ENCODE measurements at regions of chr17 and their contacts with region 1.

Region 1: DNA sequence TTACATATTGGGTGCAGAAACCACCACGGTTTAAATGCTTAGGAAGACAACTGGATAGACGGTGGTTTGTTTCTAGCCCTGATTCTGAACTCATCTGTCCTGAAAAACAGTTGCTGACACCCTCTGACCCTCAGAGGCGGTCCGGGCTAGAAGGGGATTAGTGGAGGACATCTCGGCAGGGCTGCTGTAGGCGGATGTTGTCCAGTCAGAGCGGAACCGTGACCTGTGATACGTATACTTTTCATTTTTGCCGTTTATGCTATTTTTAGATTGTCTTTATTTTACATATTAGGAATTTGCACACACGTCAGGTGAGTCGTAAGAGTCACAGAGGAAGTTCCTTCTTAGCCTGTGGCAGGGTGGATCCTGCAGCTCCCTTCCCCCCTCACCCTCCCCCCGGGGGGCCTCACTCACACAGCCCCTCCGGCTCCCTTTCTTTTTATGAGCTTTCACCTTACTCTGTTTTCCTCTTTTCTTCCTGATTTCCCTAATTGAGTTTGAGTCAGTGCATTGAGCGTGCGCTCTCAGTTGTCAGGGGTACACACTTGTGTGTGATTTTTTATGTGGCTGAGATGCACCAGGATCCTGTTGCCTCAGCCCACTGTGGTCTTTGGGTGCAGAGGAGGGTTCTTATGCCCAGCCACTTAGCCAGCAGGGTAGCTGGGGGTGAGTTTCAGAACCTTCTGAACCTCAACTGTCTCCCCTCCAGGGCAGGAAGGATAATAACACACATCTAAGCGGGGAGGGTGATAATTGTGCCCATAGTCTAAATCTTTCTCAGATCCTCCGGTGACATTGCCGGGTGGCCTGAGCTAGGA is 211.1 kb upstream of the CHMP6 start:
- DNase-seq: peak in 1 of 5 donors; percentile 46
- H3K4me3 ChIP-seq: peak overlapping the region; percentile 52
- H3K4me3 Mint-ChIP-seq: peak overlapping the region; percentile 66 to 83 (median 75)
- H3K27ac ChIP-seq: peak overlapping the region; percentile 11
- H3K27ac Mint-ChIP-seq: peak overlapping the region; percentile 66 to 96 (median 86)
- H3K4me1 ChIP-seq: peaks cover 58% of the 10 kb centered on the region
- H3K4me1 Mint-ChIP-seq: peaks cover 44 to 70% (median 63%) of the 10 kb centered on the region in 3 donors
- H3K27me3 ChIP-seq: no peaks in the 10 kb centered on the region
- H3K27me3 Mint-ChIP-seq: peaks cover 0 to 2% of the 10 kb centered on the region in 2 donors

Region 2: DNA sequence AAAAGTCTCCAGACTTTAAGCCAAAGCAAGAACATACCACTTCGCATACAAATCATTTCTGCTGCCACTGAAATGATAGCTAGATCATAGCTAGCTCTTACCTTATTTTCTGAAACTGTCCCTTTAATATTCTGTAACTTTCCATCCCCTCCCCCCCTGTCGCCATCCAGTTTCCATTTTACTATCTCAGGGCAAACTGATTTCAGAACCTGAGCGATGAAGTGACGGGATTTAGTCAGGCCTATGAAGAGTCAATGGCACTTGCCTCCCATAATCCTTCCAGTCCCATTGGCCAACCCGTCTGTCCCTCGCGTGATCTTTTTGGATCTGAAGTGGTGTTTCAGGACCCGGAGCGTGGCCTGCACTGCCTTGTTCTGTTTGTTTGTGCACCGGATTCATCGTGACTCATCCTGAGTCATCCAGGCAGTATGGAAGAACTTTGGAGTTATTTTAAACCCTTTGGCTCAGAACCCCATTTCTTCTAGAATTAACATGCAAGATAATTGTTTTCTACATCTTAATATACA is 11.2 kb after region 1 on chr17:
- CTCF ChIA-PET with region 1: interaction called, 11 read pairs
- POLR2A ChIA-PET with region 1: interaction called, 15 read pairs
- DNase-seq: no peak
- H3K4me3 ChIP-seq: peak overlapping the region; percentile 46
- H3K4me3 Mint-ChIP-seq: peak overlapping the region; percentile 53 to 88 (median 81)
- H3K27ac ChIP-seq: peak overlapping the region; percentile 48
- H3K27ac Mint-ChIP-seq: peak overlapping the region; percentile 85 to 96 (median 90)
- H3K4me1 ChIP-seq: peaks cover 60% of the 10 kb centered on the region
- H3K4me1 Mint-ChIP-seq: peaks cover 56 to 74% (median 72%) of the 10 kb centered on the region in 3 donors
- H3K27me3 ChIP-seq: no peaks in the 10 kb centered on the region
- H3K27me3 Mint-ChIP-seq: no peaks in the 10 kb centered on the region